ENCODE measurements at regions of chr12 and their contacts with region 1.

Region 1: DNA sequence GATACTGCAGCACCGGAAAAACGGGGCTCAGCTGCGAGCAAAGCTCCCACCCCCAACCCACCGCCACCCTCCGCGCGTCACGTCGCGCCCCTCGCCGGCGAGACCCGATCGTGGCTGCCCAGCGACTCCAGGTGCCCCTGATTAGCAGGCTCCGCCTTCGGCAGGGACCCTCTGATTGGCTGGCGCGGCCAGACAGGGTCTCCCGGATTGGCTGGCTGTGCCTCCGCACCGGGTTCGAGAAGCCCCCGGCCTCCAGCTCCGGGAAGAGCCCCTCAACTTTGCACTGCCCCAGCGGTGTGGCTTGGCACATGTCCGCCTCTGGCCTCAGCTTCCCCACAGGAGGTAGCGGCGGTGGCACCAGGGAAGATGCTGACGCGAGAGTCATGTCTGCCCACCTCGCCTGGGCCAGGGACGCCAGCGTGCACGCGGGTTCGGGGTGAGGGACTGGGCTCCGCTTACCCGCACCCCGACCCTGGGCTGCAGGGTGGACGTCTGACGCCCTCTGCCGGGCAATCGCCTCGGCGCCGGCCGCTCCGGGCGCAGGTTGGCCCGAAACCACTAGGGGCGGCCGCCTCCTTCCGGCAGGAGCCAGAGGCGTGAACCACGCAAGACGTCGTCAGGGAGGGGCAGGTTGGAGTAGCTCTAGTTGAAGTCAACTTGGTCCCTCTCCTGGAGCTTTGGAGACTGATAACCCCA is 498 bp upstream of the RHOF start:
- DNase-seq: peak; percentile 96
- H3K4me3 ChIP-seq: peak overlapping the region; percentile 32 to 59 (median 46)
- H3K27ac ChIP-seq: peak overlapping the region; percentile 100
- H3K4me1 ChIP-seq: peaks cover 0 to 65% (median 62%) of the 10 kb centered on the region in 4 donors
- H3K27me3 ChIP-seq: no peaks in the 10 kb centered on the region
- CTCF ChIP-seq: peak; percentile 99 to 100 (median 100)
- EP300 ChIP-seq: no peak
- POLR2A ChIP-seq: no peak

Region 2: DNA sequence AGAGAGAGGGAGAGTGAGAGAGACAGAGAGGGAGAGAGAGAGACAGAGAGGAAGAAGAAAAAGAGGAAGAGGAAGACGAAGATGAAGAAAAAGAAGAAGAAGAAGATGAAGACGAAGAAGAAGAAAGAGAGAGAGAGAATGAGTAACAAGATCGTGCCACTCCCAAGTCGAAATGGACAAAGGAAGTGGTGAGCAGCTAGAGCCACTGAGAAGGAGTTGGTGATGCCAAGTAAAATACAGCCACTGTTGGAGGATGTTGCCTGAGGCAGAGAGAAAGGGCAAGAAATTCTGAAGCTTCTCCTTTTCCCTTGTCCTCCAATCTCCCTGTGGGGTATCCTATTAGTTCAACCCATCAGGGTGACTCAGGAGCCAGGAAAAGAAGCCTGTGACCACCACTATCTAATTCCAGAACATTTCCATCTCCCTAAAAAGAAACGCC is 429.3 kb before region 1 on chr12:
- intact Hi-C with region 1: no loop called
- DNase-seq: no peak
- H3K4me3 ChIP-seq: no peak overlapping the region
- H3K27ac ChIP-seq: no peak overlapping the region
- H3K4me1 ChIP-seq: no peaks in the 10 kb centered on the region
- H3K27me3 ChIP-seq: no peaks in the 10 kb centered on the region
- CTCF ChIP-seq: no peak
- EP300 ChIP-seq: no peak
- POLR2A ChIP-seq: no peak

Region 3: DNA sequence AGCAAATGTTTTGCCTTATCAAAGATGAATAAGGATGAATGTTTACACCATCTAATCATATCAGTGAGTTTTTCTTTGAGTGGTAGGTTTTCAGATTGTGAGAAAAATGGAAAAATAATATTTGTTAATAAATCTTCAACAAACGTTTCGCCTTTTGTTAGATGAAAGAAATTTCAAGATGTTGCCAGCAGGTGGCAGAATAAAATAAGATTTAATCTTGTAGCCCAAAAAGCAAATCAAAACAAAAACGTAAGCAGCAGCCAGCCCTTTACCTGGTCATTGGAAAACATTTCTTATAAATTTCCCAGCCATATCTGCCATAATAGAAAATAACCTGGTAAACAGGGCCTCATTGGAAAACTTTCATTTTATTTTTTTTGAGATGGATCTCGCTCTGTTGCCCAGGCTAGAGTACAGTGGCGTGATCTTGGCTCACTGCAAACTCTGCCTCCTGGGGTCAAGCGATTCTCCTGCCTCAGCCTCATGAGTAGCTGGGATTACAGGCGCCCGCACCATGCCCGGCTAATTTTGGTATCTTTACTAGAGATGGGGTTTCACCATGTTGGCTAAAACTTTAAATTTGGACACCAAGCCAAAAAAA is 96.8 kb before region 1 on chr12:
- intact Hi-C with region 1: loop called (anchors 1 kb)
- DNase-seq: no peak
- H3K4me3 ChIP-seq: no peak overlapping the region
- H3K27ac ChIP-seq: no peak overlapping the region
- H3K4me1 ChIP-seq: peaks cover 0 to 6% (median 3%) of the 10 kb centered on the region in 4 donors
- H3K27me3 ChIP-seq: no peaks in the 10 kb centered on the region
- CTCF ChIP-seq: peak; percentile 39 to 66 (median 60)
- EP300 ChIP-seq: no peak
- POLR2A ChIP-seq: no peak

Region 4: GRCh38 chr12:121773011-121773777 is 20.8 kb before region 1 on chr12:
- intact Hi-C with region 1: loop called (anchors 1 kb)
- DNase-seq: peak; percentile 84
- H3K4me3 ChIP-seq: no peak overlapping the region
- H3K27ac ChIP-seq: peak overlapping the region; percentile 53 to 81 (median 71)
- H3K4me1 ChIP-seq: peaks cover 0 to 25% (median 20%) of the 10 kb centered on the region in 4 donors
- H3K27me3 ChIP-seq: no peaks in the 10 kb centered on the region
- CTCF ChIP-seq: peak; percentile 82 to 94 (median 88)
- EP300 ChIP-seq: no peak
- POLR2A ChIP-seq: no peak

Region 5: GRCh38 chr12:121811434-121812319 is 17.7 kb after region 1 on chr12:
- intact Hi-C with region 1: loop called (anchors 1 kb)
- DNase-seq: peak; percentile 87
- H3K4me3 ChIP-seq: peak overlapping the region; percentile 43 to 75 (median 59)
- H3K27ac ChIP-seq: peak overlapping the region; percentile 79 to 85 (median 82)
- H3K4me1 ChIP-seq: peaks cover 0 to 57% (median 48%) of the 10 kb centered on the region in 4 donors
- H3K27me3 ChIP-seq: no peaks in the 10 kb centered on the region
- CTCF ChIP-seq: peak; percentile 83 to 100 (median 92)
- EP300 ChIP-seq: no peak
- POLR2A ChIP-seq: no peak

Region 6: DNA sequence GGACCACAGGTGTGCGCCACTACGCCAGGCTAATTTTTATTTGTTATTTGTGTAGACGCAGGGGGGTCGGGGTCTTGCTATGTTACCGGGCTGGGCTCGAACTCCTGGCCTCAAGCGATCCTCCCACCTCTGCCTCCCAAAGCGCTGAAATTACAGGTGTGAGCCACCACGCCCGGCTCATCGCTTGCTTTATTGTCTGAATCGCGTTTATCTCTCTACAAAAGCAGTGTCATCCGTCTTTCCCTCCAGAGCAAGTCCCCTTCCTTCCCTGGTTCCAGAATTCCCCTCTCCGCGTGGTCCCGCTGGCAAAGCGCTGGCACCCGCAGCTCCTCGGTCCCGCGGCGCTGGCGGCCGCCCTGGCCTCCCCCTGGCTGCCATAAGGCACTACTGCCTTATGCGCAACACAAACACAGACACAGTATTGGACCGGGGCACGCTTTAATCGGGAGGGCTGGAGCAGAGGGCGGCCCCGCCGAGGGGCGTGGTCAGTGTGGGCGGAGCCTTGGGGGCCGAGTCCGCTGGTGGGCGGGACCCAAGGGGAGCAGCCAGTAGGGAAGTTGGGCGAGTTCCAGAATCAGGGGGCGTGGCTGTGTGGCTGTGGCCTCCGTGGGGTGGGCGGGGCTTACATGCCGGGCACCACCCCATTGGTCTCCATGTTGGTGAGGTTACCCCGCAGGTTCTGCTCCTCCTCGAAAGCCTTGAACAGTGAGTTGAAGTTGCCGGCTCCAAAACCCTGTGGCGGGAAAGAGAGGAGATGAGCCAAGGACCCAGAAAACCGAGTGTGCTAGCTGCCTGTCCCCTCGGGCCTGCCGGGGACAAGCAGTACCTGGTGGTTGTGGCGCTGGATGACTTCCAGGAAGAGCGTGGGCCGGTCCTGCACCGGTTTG is 45.4 kb after region 1 on chr12:
- intact Hi-C with region 1: loop called (anchors 2 kb)
- DNase-seq: peak; percentile 100
- H3K4me3 ChIP-seq: peak overlapping the region; percentile 45 to 57 (median 54)
- H3K27ac ChIP-seq: peak overlapping the region; percentile 55 to 78 (median 75)
- H3K4me1 ChIP-seq: peaks cover 0 to 13% (median 11%) of the 10 kb centered on the region in 4 donors
- H3K27me3 ChIP-seq: no peaks in the 10 kb centered on the region
- CTCF ChIP-seq: peak; percentile 30 to 53 (median 48)
- EP300 ChIP-seq: no peak
- POLR2A ChIP-seq: peak; percentile 16 to 26

Region 7: DNA sequence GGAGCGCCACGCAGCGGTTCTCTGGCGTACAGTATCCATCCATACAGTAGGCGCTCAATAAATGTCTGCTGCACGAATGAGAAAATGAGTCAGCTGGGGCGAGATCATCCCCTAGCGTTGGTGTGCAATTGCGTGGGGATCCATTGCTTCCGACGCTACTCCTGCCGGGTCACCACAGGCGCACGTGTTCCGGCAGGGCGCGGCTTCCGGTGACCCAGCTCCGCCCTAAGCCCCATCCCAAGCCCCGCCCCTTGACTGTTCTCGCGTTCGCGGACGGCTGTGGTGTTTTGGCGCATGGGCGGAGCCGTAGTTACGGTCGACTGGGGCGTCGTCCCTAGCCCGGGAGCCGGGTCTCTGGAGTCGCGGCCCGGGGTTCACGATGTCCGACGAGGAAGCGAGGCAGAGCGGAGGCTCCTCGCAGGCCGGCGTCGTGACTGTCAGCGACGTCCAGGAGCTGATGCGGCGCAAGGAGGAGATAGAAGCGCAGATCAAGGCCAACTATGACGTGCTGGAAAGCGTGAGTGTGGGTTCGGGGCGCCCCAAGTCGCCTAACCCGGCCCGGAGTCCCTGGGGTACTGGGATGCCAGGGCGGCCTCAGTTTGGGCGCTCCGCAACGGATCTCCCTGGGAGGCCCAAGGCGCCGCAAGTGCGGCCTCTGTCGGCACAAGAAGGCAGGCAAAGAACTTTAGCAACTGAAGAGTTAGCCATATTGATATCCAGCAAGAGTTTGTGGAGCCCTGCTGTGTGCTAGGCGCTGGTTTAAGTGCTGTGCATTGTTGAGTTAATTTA is 94.7 kb after region 1 on chr12 and contains the start of gene PSMD9:
- intact Hi-C with region 1: loop called (anchors 2 kb)
- DNase-seq: peak; percentile 99
- H3K4me3 ChIP-seq: peak within 1 kb of the TSS; percentile 67 to 78 (median 74)
- H3K27ac ChIP-seq: peak within 1 kb of the TSS; percentile 94 to 97 (median 97)
- H3K4me1 ChIP-seq: peaks cover 0 to 35% (median 29%) of the 10 kb centered on the region in 4 donors
- H3K27me3 ChIP-seq: no peaks in the 10 kb centered on the region
- CTCF ChIP-seq: peak; percentile 59 to 65 (median 62)
- EP300 ChIP-seq: peak in 1 of 4 donors; percentile 56
- POLR2A ChIP-seq: peak; percentile 35 to 74
- total RNA-seq, gene PSMD9: 28.5 to 91.4 (median 39.1) TPM

Region 8: GRCh38 chr12:121903202-121903601 is 109.2 kb after region 1 on chr12:
- intact Hi-C with region 1: no loop called
- DNase-seq: no peak
- H3K4me3 ChIP-seq: no peak overlapping the region
- H3K27ac ChIP-seq: no peak overlapping the region
- H3K4me1 ChIP-seq: no peaks in the 10 kb centered on the region
- H3K27me3 ChIP-seq: no peaks in the 10 kb centered on the region
- CTCF ChIP-seq: no peak
- EP300 ChIP-seq: no peak
- POLR2A ChIP-seq: no peak

Measured in sigmoid colon (tissue), 7 donors.